HEK293T (cell line): ENCODE measurements at regions of chr22 and their contacts with region 1.

Region 1: GRCh38 chr22:22214819-22215329 is 29.7 kb upstream of the VPREB1 start:
- DNase-seq: no peak

Region 2: DNA sequence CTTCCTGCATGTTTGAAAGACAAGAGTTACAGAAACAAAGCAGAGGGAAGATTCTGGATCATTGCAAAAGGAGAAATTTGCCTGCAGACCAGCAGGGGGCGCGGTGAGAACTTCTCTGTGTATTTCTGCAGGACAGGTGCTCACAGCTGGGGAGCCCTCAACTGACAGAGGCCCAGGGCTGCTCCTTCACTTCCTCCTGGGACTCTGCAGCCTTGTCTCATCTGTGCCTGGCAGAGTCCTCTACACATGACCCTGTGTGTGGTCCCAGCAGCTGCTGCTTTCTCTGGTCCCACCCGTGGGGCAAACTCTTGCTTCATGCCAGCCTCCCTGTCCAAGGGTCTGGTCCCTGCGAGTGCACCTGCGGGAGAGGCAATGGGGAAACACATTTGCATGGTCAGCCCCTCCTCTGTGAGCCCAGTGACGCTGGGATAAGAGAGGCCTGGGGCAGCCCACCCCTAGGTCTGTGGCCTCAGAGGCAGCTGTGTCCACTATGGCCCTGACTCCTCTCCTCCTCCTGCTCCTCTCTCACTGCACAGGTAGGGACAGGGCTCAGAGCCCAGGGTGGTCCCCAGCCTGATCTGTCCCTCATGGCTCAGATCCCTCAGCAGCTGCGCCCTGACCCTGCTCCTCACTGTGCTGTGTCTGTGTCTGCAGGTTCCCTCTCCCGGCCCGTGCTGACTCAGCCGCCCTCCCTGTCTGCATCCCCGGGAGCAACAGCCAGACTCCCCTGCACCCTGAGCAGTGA is 13.5 kb before region 1 on chr22:
- CTCF ChIA-PET with region 1: interaction called, 12 read pairs
- POLR2A ChIA-PET with region 1: no interaction called
- DNase-seq: peak; percentile 71